CD4-positive, alpha-beta memory T cell (primary cell): ENCODE measurements at regions of chr22 and their contacts with region 1.

Region 1: DNA sequence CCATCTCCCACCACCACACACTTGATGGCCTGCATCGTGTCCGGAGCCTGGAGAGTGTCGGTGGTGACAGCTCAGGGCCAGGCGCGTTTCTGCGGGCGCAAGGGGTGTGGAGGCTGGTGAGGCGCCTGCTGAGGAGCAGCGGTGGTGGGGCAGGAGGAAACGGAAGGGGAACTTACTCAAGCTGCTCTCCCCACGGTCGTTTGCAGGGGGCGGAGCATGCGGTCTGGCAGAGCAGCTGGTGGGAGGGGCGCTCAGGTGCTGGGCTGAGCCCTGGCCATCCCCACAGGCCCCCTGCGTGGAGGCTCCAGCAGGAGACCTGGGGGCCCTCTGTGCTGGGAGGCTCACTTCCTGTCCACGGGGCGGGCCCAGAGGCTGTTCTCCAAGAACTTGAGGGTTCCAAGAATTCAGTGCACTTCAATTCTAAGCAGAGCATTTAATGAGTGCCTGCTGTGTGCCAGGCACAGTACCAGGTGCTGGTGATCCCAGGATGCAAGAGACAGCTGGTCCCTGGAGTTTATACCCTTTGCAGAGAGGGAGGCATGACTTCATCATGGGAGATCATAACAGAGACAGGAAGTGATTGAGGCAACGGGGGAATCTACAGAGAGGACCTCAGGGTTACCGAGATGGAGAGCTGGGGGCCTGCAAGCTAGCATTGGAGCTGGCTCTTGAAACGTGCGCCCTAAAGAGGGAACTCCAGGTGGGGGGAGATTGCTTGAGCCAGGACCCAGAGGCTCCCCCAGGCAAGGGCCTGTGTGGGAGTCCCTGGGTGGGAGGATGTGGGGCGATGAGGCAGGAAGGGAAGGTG is at the start of gene RAC2:
- DNase-seq: peak; percentile 77 to 94 (median 79)
- H3K4me3 ChIP-seq: peak within 1 kb of the TSS; percentile 89 to 99
- H3K4me3 Mint-ChIP-seq: peak within 1 kb of the TSS; percentile 91 to 99 (median 96)
- H3K27ac ChIP-seq: peak within 1 kb of the TSS; percentile 91
- H3K27ac Mint-ChIP-seq: peak within 1 kb of the TSS; percentile 87 to 98 (median 97)
- H3K4me1 ChIP-seq: peaks cover 45% of the 10 kb centered on the region
- H3K4me1 Mint-ChIP-seq: peaks cover 31 to 57% (median 42%) of the 10 kb centered on the region in 4 donors
- H3K27me3 ChIP-seq: no peaks in the 10 kb centered on the region
- H3K27me3 Mint-ChIP-seq: no peaks in the 10 kb centered on the region
- total RNA-seq, gene RAC2: 304 to 318 TPM

Region 2: GRCh38 chr22:36913427-36914389 is 330.6 kb before region 1 on chr22 and contains the start of gene CSF2RB:
- CTCF ChIA-PET with region 1: no interaction called
- POLR2A ChIA-PET with region 1: no interaction called
- intact Hi-C with region 1: no loop called
- DNase-seq: no peak
- H3K4me3 ChIP-seq: no peak within 1 kb of the TSS
- H3K4me3 Mint-ChIP-seq: peak within 1 kb of the TSS in 1 of 8 donors; percentile 42
- H3K27ac ChIP-seq: no peak within 1 kb of the TSS
- H3K27ac Mint-ChIP-seq: peak within 1 kb of the TSS in 1 of 7 donors; percentile 24
- H3K4me1 ChIP-seq: no peaks in the 10 kb centered on the region
- H3K4me1 Mint-ChIP-seq: peaks cover 0 to 4% (median 0%) of the 10 kb centered on the region in 4 donors
- H3K27me3 ChIP-seq: no peaks in the 10 kb centered on the region
- H3K27me3 Mint-ChIP-seq: peaks cover 5 to 16% of the 10 kb centered on the region in 2 donors
- total RNA-seq, gene CSF2RB: 1.2 TPM

Region 3: GRCh38 chr22:37077884-37078485 is 166.3 kb before region 1 on chr22:
- CTCF ChIA-PET with region 1: interaction called, 10 read pairs
- POLR2A ChIA-PET with region 1: interaction called, 4 read pairs
- intact Hi-C with region 1: loop called (anchors 5 kb)
- DNase-seq: peak; percentile 76 to 85 (median 81)
- H3K4me3 ChIP-seq: no peak overlapping the region
- H3K4me3 Mint-ChIP-seq: peak overlapping the region in 7 of 8 donors; percentile 2 to 73 (median 58)
- H3K27ac ChIP-seq: peak overlapping the region; percentile 44
- H3K27ac Mint-ChIP-seq: peak overlapping the region; percentile 93 to 100 (median 99)
- H3K4me1 ChIP-seq: peaks cover 34% of the 10 kb centered on the region
- H3K4me1 Mint-ChIP-seq: peaks cover 26 to 52% (median 39%) of the 10 kb centered on the region in 4 donors
- H3K27me3 ChIP-seq: no peaks in the 10 kb centered on the region
- H3K27me3 Mint-ChIP-seq: peaks cover 4 to 5% of the 10 kb centered on the region in 2 donors

Region 4: DNA sequence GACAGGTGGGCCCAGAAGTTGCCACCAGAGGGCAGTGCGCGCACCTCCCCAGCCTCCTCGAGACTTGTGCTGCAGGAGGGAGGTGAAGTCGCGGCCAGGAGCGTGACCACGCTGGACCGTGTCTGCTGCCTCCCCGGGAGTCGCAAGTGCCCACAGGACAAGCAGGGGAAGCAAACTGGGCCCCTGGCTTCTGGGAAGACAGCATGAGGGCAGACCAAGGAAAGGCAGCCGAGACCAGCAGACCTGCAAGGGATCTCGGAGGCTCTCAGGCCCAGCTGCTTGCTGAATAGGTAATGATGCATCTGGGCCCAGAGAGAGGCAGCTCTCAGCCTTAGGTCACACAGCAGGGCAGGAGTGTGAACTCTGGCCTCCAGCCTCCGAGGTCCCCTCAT is 77.6 kb before region 1 on chr22:
- CTCF ChIA-PET with region 1: interaction called, 6 read pairs
- POLR2A ChIA-PET with region 1: interaction called, 15 read pairs
- intact Hi-C with region 1: loop called (anchors 5 kb)
- DNase-seq: peak; percentile 73 to 82 (median 78)
- H3K4me3 ChIP-seq: peak overlapping the region; percentile 15 to 18
- H3K4me3 Mint-ChIP-seq: peak overlapping the region; percentile 75 to 90 (median 86)
- H3K27ac ChIP-seq: peak overlapping the region; percentile 37
- H3K27ac Mint-ChIP-seq: peak overlapping the region; percentile 85 to 98 (median 93)
- H3K4me1 ChIP-seq: peaks cover 90% of the 10 kb centered on the region
- H3K4me1 Mint-ChIP-seq: peaks cover 63 to 95% (median 78%) of the 10 kb centered on the region in 4 donors
- H3K27me3 ChIP-seq: no peaks in the 10 kb centered on the region
- H3K27me3 Mint-ChIP-seq: no peaks in the 10 kb centered on the region

Region 5: DNA sequence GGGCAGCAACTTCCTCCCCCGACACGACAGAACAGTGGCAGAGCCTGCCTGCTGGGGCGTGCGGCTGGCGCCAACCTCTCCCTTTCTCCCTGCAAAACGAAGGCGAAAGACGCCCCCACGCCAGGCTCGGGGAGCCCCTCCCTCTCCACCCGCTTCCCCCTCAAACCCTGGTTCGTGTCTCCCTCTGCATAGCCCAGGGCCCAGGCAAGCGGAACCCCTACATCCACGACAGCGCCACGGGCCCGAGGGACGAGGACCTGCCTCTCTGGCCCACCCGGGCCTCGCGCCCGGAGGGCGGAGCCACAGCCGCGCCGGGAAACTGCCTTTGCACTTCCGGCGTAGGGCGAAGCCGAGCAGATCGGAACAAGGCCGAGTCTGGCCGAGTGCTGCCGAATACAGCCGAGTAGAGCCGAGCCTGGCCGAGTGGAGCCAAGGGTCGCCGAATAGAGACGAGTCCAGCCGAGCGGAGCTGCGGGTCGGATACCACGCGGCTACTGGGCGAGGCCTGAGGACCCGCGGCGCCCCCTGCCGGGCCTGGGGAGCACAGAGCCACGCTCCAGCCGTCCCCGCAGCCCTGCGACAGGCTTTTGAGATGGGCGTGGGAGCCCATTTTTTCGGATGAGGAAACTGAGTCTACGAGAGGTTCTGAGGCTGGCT is 45.1 kb before region 1 on chr22:
- CTCF ChIA-PET with region 1: interaction called, 106 read pairs
- POLR2A ChIA-PET with region 1: interaction called, 129 read pairs
- intact Hi-C with region 1: loop called (anchors 1 kb)
- DNase-seq: peak; percentile 97 to 100 (median 99)
- H3K4me3 ChIP-seq: peak overlapping the region; percentile 57 to 73
- H3K4me3 Mint-ChIP-seq: peak overlapping the region; percentile 79 to 91 (median 84)
- H3K27ac ChIP-seq: peak overlapping the region; percentile 93
- H3K27ac Mint-ChIP-seq: peak overlapping the region; percentile 89 to 96 (median 93)
- H3K4me1 ChIP-seq: peaks cover 39% of the 10 kb centered on the region
- H3K4me1 Mint-ChIP-seq: peaks cover 10 to 40% (median 22%) of the 10 kb centered on the region in 4 donors
- H3K27me3 ChIP-seq: no peaks in the 10 kb centered on the region
- H3K27me3 Mint-ChIP-seq: no peaks in the 10 kb centered on the region

Region 6: GRCh38 chr22:37260901-37261336 is 16.6 kb after region 1 on chr22:
- CTCF ChIA-PET with region 1: interaction called, 491 read pairs
- POLR2A ChIA-PET with region 1: interaction called, 145 read pairs
- intact Hi-C with region 1: loop called (anchors 1 kb)
- DNase-seq: peak; percentile 62 to 70 (median 65)
- H3K4me3 ChIP-seq: no peak overlapping the region
- H3K4me3 Mint-ChIP-seq: peak overlapping the region in 4 of 8 donors; percentile 2 to 40 (median 22)
- H3K27ac ChIP-seq: no peak overlapping the region
- H3K27ac Mint-ChIP-seq: peak overlapping the region; percentile 15 to 73 (median 52)
- H3K4me1 ChIP-seq: peaks cover 19% of the 10 kb centered on the region
- H3K4me1 Mint-ChIP-seq: peaks cover 11 to 18% (median 14%) of the 10 kb centered on the region in 4 donors
- H3K27me3 ChIP-seq: no peaks in the 10 kb centered on the region
- H3K27me3 Mint-ChIP-seq: peaks cover 0 to 1% of the 10 kb centered on the region in 2 donors

Region 7: GRCh38 chr22:37309211-37310074 is 65.1 kb after region 1 on chr22:
- CTCF ChIA-PET with region 1: interaction called, 4 read pairs
- POLR2A ChIA-PET with region 1: interaction called, 38 read pairs
- intact Hi-C with region 1: no loop called
- DNase-seq: peak; percentile 61 to 72 (median 67)
- H3K4me3 ChIP-seq: peak overlapping the region; percentile 49 to 54
- H3K4me3 Mint-ChIP-seq: peak overlapping the region; percentile 79 to 90 (median 82)
- H3K27ac ChIP-seq: peak overlapping the region; percentile 59
- H3K27ac Mint-ChIP-seq: peak overlapping the region; percentile 70 to 100 (median 92)
- H3K4me1 ChIP-seq: peaks cover 78% of the 10 kb centered on the region
- H3K4me1 Mint-ChIP-seq: peaks cover 56 to 94% (median 70%) of the 10 kb centered on the region in 4 donors
- H3K27me3 ChIP-seq: no peaks in the 10 kb centered on the region
- H3K27me3 Mint-ChIP-seq: no peaks in the 10 kb centered on the region

Region 8: DNA sequence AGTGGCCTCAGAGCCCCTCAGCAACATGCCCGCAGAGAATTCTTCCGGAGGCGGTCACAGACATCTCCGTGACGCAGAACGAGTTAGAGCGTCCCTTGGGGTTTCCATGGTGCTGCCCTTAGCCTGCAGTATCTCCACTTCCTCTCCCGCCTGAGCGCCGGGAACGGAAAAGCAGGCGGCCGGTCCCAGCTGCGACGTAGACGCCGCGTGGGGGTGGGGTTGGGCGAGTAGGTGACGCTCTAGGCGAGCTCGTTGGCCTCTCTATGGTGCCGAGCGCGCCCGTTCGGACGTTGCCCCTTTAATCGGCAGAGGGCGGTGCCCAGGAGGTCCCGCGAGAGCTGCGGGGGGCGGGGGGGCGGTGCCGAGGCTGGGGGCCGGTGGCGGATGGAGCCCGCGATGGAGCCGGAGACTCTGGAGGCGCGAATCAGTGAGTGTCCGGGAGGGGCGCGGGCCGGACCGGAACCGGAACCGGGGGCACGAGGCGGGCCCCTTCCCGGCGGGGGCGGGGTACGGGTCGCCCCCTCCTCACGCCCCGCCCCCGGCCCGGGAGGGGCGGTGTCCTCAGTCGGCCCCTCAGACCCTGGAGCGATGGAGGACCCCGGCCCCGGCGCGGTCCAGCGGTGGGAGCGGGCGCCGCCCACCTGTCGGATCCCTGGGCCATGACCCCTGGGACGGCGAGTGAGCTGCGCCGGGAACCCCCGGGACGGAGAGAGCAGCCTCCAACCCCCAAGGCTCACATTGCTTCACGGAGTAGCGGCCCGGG is 364.3 kb after region 1 on chr22 and contains the start of gene GGA1:
- CTCF ChIA-PET with region 1: no interaction called
- POLR2A ChIA-PET with region 1: no interaction called
- intact Hi-C with region 1: loop called (anchors 5 kb)
- DNase-seq: peak; percentile 97 to 99 (median 98)
- H3K4me3 ChIP-seq: peak within 1 kb of the TSS; percentile 30 to 85
- H3K4me3 Mint-ChIP-seq: peak within 1 kb of the TSS; percentile 90 to 98 (median 94)
- H3K27ac ChIP-seq: peak within 1 kb of the TSS; percentile 88
- H3K27ac Mint-ChIP-seq: peak within 1 kb of the TSS; percentile 94 to 99 (median 98)
- H3K4me1 ChIP-seq: peaks cover 64% of the 10 kb centered on the region
- H3K4me1 Mint-ChIP-seq: peaks cover 35 to 68% (median 50%) of the 10 kb centered on the region in 4 donors
- H3K27me3 ChIP-seq: no peaks in the 10 kb centered on the region
- H3K27me3 Mint-ChIP-seq: no peaks in the 10 kb centered on the region
- total RNA-seq, gene GGA1: 108 to 109 TPM